Common myeloid progenitor, CD34-positive (primary cell): ENCODE measurements at regions of chr10 and their contacts with region 1.

Region 1: DNA sequence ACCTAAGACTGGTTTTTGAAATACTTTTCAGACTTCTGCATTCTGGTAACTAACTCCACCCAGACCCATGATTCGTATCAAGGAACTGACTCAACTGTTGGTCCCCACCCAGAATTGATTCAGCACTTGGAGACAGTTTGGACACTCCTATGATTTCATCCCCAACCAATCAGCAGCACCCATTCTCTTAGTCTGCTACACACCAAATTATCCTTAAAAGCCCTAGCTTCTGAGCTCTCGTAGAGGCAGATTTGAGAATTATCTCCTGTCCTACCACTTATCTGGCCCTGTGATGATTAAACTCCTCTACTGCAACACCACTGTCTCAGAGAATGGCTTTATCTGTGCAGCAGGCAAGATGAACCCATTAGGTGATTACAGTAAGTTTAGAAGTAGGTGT is 7.7 kb upstream of the GSTO1 start:
- DNase-seq: peak; percentile 66 to 90 (median 83)
- H3K4me3 ChIP-seq: peak overlapping the region in 3 of 7 experiments; percentile 13 to 46 (median 42)
- H3K27ac ChIP-seq: peak overlapping the region; percentile 19 to 82
- H3K4me1 ChIP-seq: peaks cover 14 to 39% (median 25%) of the 10 kb centered on the region in 4 experiments
- H3K27me3 ChIP-seq: no peaks in the 10 kb centered on the region

Region 2: GRCh38 chr10:104260775-104261115 is 13.8 kb after region 1 on chr10:
- CTCF ChIA-PET with region 1: interaction called, 11 read pairs
- POLR2A ChIA-PET with region 1: interaction called, 3 read pairs
- DNase-seq: peak in 2 of 3 donors; percentile 67 to 78
- H3K4me3 ChIP-seq: peak overlapping the region in 1 of 7 experiments; percentile 10
- H3K27ac ChIP-seq: peak overlapping the region; percentile 33 to 68
- H3K4me1 ChIP-seq: peaks cover 7 to 37% (median 20%) of the 10 kb centered on the region in 4 experiments
- H3K27me3 ChIP-seq: no peaks in the 10 kb centered on the region